Right ventricle myocardium inferior (tissue), 1 donor: ENCODE measurements at regions of chr3 and their contacts with region 1.

Region 1: DNA sequence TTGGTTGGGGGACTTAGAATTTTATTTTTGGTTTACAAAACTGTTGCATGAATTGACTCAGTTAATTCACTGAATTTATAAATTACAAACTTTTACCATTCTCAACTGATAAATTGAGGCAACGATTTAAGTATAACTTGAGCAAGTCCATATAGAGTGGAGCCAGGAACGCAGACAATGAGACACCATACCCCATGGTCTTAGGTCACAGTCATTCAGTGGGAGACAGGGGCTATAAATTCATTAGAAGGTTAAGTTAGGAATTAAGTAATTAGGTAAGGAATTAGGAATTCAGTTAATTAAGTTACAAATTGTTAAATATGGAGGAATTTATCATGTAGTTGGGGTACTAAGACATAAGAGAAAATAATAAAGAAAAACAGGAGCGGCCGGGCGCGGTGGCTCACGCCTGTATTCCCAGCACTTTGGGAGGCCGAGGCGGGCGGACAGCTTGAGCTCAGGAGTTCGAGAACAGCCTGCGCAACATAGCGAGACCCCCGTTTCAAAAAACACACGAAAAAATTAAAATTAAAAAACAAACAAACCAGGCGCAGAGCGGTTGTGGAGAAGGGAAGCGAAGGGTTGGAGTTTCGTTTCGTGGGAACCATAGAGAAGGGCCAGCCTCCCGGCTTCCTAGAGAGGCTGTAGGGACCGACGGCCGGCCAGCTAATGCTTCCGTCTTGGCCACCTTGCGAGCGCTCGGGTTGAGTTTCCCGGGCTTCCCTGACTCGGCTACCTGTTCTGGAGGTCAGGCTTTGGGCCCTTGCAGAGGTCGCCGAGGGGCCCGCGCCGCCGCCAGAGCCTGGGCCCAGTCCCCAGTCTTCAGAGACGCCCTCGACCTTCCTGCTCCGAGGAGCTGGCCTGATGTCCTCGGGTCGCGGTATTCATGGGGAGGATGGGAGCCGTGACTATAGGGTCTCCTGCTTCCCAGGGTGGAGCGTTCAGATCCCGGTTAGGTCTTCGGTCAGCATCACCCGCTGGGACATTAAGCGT is at the start of gene ZNF619:
- DNase-seq: peak; percentile 90
- ATAC-seq: peak; percentile 91
- total RNA-seq, gene ZNF619: 3.9 TPM

Region 2: GRCh38 chr3:40452876-40453730 is 23.7 kb before region 1 on chr3:
- intact Hi-C with region 1: loop called (anchors 2 kb)
- DNase-seq: peak; percentile 99
- ATAC-seq: peak; percentile 97

Region 3: GRCh38 chr3:40505599-40506462 is 29.1 kb after region 1 on chr3 and contains the start of gene ZNF620:
- intact Hi-C with region 1: loop called (anchors 2 kb)
- DNase-seq: peak; percentile 77
- ATAC-seq: peak; percentile 91
- total RNA-seq, gene ZNF620: 1.6 TPM

Region 4: GRCh38 chr3:40793730-40794129 is 317.0 kb after region 1 on chr3:
- intact Hi-C with region 1: no loop called
- DNase-seq: no peak
- ATAC-seq: no peak